ENCODE measurements at regions of chr9 and their contacts with region 1.

Region 1: DNA sequence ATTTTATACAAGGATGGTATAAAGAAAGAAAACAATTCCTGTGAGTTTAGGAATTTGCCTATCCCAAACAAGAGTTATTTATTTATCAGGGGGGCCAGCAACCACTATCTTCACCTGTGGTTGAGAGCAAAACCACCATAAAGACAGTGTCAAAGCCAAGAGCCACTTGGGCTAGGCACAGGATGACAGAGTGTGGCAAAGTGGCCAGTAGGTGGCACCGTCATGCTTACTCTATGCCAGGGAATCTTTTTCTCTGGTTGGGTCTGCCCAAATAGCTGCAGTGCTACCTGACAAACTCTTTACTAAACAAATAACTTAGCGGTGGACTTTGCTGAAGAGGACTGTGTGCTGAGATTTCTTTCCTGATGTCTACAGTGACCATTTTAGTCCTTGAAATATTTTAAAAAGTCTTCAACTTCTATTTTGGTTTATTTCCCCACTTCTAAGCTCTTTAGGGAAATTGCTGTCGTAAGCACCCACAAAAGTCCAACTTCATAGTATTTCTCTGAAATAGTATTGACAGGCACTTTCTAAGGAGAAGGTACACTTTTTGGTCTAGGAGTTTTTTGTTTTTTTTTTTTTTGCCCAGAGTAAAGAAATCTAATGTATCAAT is 285.0 kb downstream of the RFX3 start:
- DNase-seq: peak; percentile 77
- ATAC-seq: peak; percentile 89
- H3K4me3 Mint-ChIP-seq: no peak overlapping the region
- H3K27ac Mint-ChIP-seq: no peak overlapping the region
- H3K4me1 Mint-ChIP-seq: peaks cover 7% of the 10 kb centered on the region
- H3K27me3 Mint-ChIP-seq: no peaks in the 10 kb centered on the region

Region 2: GRCh38 chr9:3441197-3441816 is 200.5 kb after region 1 on chr9:
- CTCF ChIA-PET with region 1: interaction called, 49 read pairs
- DNase-seq: peak; percentile 65
- ATAC-seq: peak; percentile 80
- H3K4me3 Mint-ChIP-seq: no peak overlapping the region
- H3K27ac Mint-ChIP-seq: no peak overlapping the region
- H3K4me1 Mint-ChIP-seq: no peaks in the 10 kb centered on the region
- H3K27me3 Mint-ChIP-seq: no peaks in the 10 kb centered on the region

Region 3: DNA sequence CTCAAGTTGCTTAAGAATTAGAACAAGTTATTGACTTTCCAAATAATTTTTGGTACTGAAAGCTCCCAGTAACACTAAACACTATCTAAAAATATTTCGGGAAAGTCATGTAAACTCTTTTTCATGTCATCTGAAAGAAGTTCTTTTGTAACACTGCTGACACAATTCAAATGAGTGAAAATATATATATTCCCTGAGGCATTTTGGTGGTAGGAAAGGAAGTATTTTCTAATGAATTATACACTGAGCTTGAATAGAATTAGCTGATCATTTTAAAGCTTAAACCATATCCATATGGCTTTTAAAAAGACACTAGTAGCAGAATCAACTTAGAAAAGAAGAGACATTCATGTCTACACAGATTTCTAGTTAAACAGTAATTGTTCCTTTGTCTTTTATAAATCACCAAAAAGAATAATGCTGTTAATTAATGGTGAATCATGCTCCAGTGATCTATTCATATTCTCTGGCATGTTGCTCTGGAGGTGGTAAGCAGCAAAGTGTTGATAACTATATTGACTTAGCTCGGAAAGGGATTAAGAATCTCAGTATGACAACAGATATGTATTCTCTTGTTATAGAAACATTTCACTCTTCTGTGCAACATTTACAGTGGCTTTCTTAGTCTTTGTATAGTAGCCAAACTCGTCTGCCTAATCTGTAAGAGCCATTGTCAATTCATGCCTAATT is 312.5 kb after region 1 on chr9:
- CTCF ChIA-PET with region 1: no interaction called
- DNase-seq: no peak
- ATAC-seq: no peak
- H3K4me3 Mint-ChIP-seq: no peak overlapping the region
- H3K27ac Mint-ChIP-seq: no peak overlapping the region
- H3K4me1 Mint-ChIP-seq: no peaks in the 10 kb centered on the region
- H3K27me3 Mint-ChIP-seq: no peaks in the 10 kb centered on the region